Gastrocnemius medialis (tissue), 4 donors: ENCODE measurements at regions of chr19 and their contacts with region 1.

Region 1: GRCh38 chr19:36573020-36573885 is at the start of gene ZNF529:
- DNase-seq: peak; percentile 79 to 85
- ATAC-seq: peak; percentile 99
- H3K4me3 ChIP-seq: peak within 1 kb of the TSS; percentile 85 to 100 (median 94)
- H3K27ac ChIP-seq: peak within 1 kb of the TSS; percentile 81 to 91 (median 88)
- H3K4me1 ChIP-seq: peaks cover 16 to 17% of the 10 kb centered on the region in 2 donors
- H3K27me3 ChIP-seq: no peaks in the 10 kb centered on the region
- CTCF ChIP-seq: no peak
- POLR2A ChIP-seq: peak; percentile 73 to 75
- total RNA-seq, gene ZNF529: 4.1 to 6.6 (median 5.4) TPM

Region 2: DNA sequence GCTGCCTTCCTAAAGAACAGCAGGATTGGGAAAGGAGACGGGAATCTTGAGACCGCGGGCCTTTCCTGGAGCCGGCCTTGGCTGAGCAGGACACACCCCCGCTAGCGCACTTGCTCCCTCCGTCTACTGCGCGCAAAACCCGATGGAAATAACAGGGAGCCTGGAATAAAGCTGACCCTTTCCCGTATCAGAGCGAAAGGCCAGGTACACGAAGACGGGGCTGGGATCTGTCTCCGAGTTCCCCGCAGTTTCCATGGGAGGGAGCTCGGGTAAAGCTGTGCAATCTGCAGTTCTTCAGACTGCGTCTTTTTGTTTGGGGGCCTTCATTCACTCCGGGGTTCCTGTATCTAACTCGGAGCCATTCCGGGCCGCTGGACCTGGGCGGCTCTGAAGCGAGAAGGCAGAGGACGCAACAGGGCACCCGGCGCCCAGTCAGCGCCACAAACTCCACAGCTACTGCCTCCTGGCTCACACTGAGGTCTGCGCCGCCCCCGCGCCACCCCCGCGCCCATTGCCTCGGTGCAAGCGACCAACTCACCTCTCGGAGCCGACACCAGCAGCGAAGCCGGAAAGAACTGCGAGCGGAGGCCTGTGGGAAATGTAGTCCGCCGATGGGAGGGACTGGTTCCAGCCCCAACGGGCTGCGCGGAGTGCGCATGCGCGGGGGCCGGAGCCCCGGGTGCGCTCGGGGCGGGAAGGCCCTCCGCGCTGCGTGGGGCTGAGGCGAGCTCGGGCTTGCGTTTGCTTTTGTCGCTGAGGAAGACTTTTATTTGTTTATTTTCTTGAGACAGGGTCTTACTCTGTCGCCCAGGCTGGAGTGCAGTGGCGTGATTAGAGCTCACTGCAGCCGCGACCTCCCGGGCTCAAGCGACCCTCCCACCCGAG is 194.4 kb before region 1 on chr19 and contains the start of gene ZFP14:
- in situ Hi-C with region 1: no loop called
- intact Hi-C with region 1: loop called (anchors 5 kb)
- DNase-seq: peak; percentile 84 to 87
- ATAC-seq: peak; percentile 99
- H3K4me3 ChIP-seq: peak within 1 kb of the TSS; percentile 67 to 93 (median 84)
- H3K27ac ChIP-seq: peak within 1 kb of the TSS; percentile 72 to 84 (median 78)
- H3K4me1 ChIP-seq: peaks cover 11 to 17% of the 10 kb centered on the region in 2 donors
- H3K27me3 ChIP-seq: no peaks in the 10 kb centered on the region
- CTCF ChIP-seq: peak in 1 of 5 experiments; percentile 9
- POLR2A ChIP-seq: peak; percentile 39 to 53
- total RNA-seq, gene ZFP14: 0.67 to 1.9 (median 0.74) TPM

Region 3: GRCh38 chr19:36489118-36489919 is 83.9 kb before region 1 on chr19 and contains the start of gene ZNF566:
- in situ Hi-C with region 1: no loop called
- intact Hi-C with region 1: loop called (anchors 1 kb)
- DNase-seq: peak; percentile 75 to 89
- ATAC-seq: peak; percentile 99 to 100
- H3K4me3 ChIP-seq: peak within 1 kb of the TSS; percentile 76 to 98 (median 76)
- H3K27ac ChIP-seq: peak within 1 kb of the TSS; percentile 90 to 98 (median 91)
- H3K4me1 ChIP-seq: peaks cover 5 to 11% of the 10 kb centered on the region in 2 donors
- H3K27me3 ChIP-seq: no peaks in the 10 kb centered on the region
- CTCF ChIP-seq: no peak
- POLR2A ChIP-seq: peak; percentile 28 to 33
- total RNA-seq, gene ZNF566: 4.1 to 8.3 (median 5.9) TPM

Region 4: DNA sequence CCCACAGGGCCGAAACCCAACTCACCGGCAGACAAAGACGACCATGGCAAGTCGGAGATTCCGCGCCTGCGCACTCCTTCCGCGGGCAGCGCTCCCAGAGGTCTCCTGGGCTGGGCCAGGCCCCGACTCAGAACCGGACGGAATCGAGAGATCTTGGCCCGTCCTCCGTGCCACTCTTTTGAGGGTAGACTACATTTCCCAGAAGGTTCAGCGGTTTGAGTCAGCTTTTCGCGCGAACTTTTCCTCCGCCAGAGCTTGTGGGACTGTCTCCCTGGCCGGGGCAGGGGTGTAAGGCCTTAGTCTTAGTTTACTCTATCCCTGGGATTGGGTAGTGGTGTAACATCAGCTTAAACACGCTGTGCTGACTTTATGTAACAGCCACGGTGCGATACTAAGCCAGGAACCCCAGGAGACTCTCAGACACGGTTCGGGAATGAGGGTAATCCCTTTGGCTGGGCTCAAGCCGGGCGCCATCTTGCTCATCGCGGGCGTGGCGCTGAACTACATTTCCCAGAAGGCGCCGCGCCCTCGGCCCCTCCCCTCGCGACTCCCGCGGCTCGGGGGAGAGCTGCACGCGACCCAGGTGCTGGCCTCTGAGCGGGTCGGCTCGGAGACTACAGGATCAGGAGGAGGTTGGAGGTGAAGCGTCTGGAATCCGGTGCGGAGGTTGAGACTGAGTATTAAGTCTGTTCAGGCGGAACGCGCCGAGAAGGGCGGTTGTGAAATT is 44.9 kb before region 1 on chr19 and contains the start of gene ZNF260:
- in situ Hi-C with region 1: no loop called
- intact Hi-C with region 1: loop called (anchors 1 kb)
- DNase-seq: peak; percentile 96
- ATAC-seq: peak; percentile 99
- H3K4me3 ChIP-seq: peak within 1 kb of the TSS; percentile 71 to 83 (median 80)
- H3K27ac ChIP-seq: peak within 1 kb of the TSS; percentile 83 to 94 (median 90)
- H3K4me1 ChIP-seq: peaks cover 16 to 17% of the 10 kb centered on the region in 2 donors
- H3K27me3 ChIP-seq: no peaks in the 10 kb centered on the region
- CTCF ChIP-seq: no peak
- POLR2A ChIP-seq: peak; percentile 43 to 56
- total RNA-seq, gene ZNF260: 1.3 to 16.3 (median 3.2) TPM

Region 5: GRCh38 chr19:36635342-36635741 is 62.1 kb after region 1 on chr19:
- in situ Hi-C with region 1: no loop called
- intact Hi-C with region 1: no loop called
- DNase-seq: no peak
- ATAC-seq: no peak
- H3K4me3 ChIP-seq: peak overlapping the region in 1 of 4 donors; percentile 6
- H3K27ac ChIP-seq: no peak overlapping the region
- H3K4me1 ChIP-seq: no peaks in the 10 kb centered on the region
- H3K27me3 ChIP-seq: no peaks in the 10 kb centered on the region
- CTCF ChIP-seq: no peak
- POLR2A ChIP-seq: no peak

Region 6: GRCh38 chr19:36837906-36838783 is 264.9 kb after region 1 on chr19 and contains the start of gene ZNF790:
- in situ Hi-C with region 1: no loop called
- intact Hi-C with region 1: loop called (anchors 5 kb)
- DNase-seq: peak; percentile 74 to 85
- ATAC-seq: peak; percentile 98 to 99
- H3K4me3 ChIP-seq: peak within 1 kb of the TSS; percentile 68 to 87 (median 79)
- H3K27ac ChIP-seq: peak within 1 kb of the TSS; percentile 74 to 90 (median 86)
- H3K4me1 ChIP-seq: peaks cover 8 to 9% of the 10 kb centered on the region in 2 donors
- H3K27me3 ChIP-seq: no peaks in the 10 kb centered on the region
- CTCF ChIP-seq: no peak
- POLR2A ChIP-seq: no peak
- total RNA-seq, gene ZNF790: 2.4 to 8.1 (median 5.2) TPM

Region 7: GRCh38 chr19:37172368-37173366 is 599.4 kb after region 1 on chr19 and contains the start of gene ZNF585A:
- in situ Hi-C with region 1: no loop called
- intact Hi-C with region 1: loop called (anchors 2 kb)
- DNase-seq: peak; percentile 90 to 93
- ATAC-seq: peak; percentile 100
- H3K4me3 ChIP-seq: peak within 1 kb of the TSS; percentile 74 to 85 (median 80)
- H3K27ac ChIP-seq: peak within 1 kb of the TSS; percentile 80 to 90 (median 84)
- H3K4me1 ChIP-seq: peaks cover 7 to 12% of the 10 kb centered on the region in 2 donors
- H3K27me3 ChIP-seq: no peaks in the 10 kb centered on the region
- CTCF ChIP-seq: peak in 2 of 5 experiments; percentile 21 to 32
- POLR2A ChIP-seq: peak in 1 of 2 donors; percentile 14
- total RNA-seq, gene ZNF585A: 2.0 to 10.5 (median 6.0) TPM